Activated CD4-positive, alpha-beta T cell treated with anti-CD3 and anti-CD28 coated beads for 36 hours (primary cell): ENCODE measurements at regions of chr14 and their contacts with region 1.

Region 1: GRCh38 chr14:74302634-74303577 is at the start of gene ABCD4:
- DNase-seq: peak; percentile 91
- ATAC-seq: peak; percentile 95
- H3K4me3 Mint-ChIP-seq: peak within 1 kb of the TSS; percentile 98
- H3K27ac Mint-ChIP-seq: peak within 1 kb of the TSS; percentile 98
- H3K4me1 Mint-ChIP-seq: peaks cover 32% of the 10 kb centered on the region
- H3K27me3 Mint-ChIP-seq: no peaks in the 10 kb centered on the region
- total RNA-seq, gene ABCD4: 43.0 to 43.1 TPM

Region 2: DNA sequence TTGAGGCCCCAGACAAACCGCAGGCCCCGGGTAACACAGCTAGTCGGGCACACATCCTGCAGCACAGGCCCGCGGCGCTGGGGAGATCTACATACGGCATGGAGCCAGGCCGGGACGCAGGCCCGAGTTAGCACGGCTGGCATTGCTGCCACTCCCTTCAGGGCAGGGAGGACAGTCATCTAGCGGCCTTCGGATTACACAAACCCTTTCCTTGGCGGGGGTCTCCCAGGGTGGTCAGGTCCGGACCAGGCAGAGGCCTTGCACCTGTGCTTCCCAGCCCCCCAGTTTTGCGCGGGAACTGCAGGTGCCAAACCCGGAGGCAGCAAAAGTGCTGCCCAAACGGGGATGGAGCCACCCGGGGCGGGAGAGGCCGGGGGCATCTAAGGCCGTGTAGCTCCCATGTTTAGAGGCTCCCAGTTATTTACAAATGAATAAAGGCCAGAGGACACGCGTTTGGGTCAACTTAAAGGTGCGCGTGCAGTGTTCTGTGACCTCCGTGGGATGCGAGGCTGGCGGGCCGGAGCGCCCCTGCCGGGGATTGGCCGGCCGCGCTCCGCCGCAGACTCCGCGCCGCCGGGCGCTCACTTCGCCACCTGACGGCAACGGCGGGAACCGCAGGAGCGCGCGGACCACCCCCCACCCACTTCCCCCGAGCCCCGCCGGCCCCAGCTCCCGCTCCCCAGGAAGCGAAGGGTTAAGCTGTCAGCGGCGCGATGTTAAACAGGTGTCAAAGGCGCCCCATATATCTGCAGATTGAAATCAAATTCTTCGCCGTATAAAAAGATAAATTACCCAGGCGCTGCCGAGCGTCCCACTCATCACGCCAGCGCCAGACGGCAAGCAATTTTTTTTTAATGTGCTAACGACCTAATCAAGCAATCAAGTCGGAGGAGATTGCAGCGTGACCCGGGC is 45.6 kb before region 1 on chr14:
- CTCF ChIA-PET with region 1: interaction called, 3 read pairs
- POLR2A ChIA-PET with region 1: no interaction called
- intact Hi-C with region 1: loop called in 1 of 2 experiments (anchors 1 kb)
- DNase-seq: peak; percentile 77
- ATAC-seq: peak; percentile 89
- H3K4me3 Mint-ChIP-seq: peak overlapping the region; percentile 69
- H3K27ac Mint-ChIP-seq: peak overlapping the region; percentile 42
- H3K4me1 Mint-ChIP-seq: peaks cover 7% of the 10 kb centered on the region
- H3K27me3 Mint-ChIP-seq: peaks cover 3% of the 10 kb centered on the region